Panc1 (cell line): ENCODE measurements at regions of chr16 and their contacts with region 1.

Region 1: GRCh38 chr16:1439058-1439698 is 5.2 kb downstream of the CCDC154 start:
- DNase-seq: no peak
- ATAC-seq: no peak
- H3K4me3 ChIP-seq: no peak overlapping the region
- H3K27ac ChIP-seq: no peak overlapping the region
- H3K4me1 ChIP-seq: no peaks in the 10 kb centered on the region
- H3K27me3 ChIP-seq: no peaks in the 10 kb centered on the region
- CTCF ChIP-seq: no peak

Region 2: GRCh38 chr16:1331712-1332617 is 107.2 kb before region 1 on chr16:
- CTCF ChIA-PET with region 1: no interaction called
- POLR2A ChIA-PET with region 1: no interaction called
- in situ Hi-C with region 1: no loop called
- intact Hi-C with region 1: no loop called
- DNase-seq: no peak
- ATAC-seq: peak; percentile 56
- H3K4me3 ChIP-seq: peak overlapping the region in 1 of 2 experiments; percentile 43; a peak in 2 of 4 replicates
- H3K27ac ChIP-seq: peak overlapping the region; percentile 57; the same call in 1 of the 2 replicates
- H3K4me1 ChIP-seq: peaks cover 17% of the 10 kb centered on the region
- H3K27me3 ChIP-seq: no peaks in the 10 kb centered on the region
- CTCF ChIP-seq: no peak

Region 3: DNA sequence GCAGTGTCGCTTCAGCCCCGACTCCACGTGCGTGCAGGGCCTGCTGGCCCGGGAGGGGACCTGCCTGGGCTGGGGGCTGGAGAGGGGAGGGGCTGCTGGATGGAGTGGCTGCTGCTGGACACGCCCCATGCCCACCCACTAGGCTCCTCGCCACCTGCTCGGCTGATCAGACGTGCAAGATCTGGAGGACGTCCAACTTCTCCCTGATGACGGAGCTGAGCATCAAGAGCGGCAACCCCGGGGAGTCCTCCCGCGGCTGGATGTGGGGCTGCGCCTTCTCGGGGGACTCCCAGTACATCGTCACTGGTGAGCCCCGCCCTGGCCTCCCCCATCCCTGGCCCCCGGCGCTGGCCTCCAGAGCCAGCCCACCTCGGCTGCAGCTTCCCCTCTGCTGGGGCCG is 769.1 kb after region 1 on chr16:
- CTCF ChIA-PET with region 1: no interaction called
- POLR2A ChIA-PET with region 1: interaction called, 10 read pairs
- in situ Hi-C with region 1: no loop called
- intact Hi-C with region 1: no loop called
- DNase-seq: no peak
- ATAC-seq: no peak
- H3K4me3 ChIP-seq: no peak overlapping the region
- H3K27ac ChIP-seq: no peak overlapping the region
- H3K4me1 ChIP-seq: peaks cover 37% of the 10 kb centered on the region
- H3K27me3 ChIP-seq: no peaks in the 10 kb centered on the region
- CTCF ChIP-seq: no peak